Activated CD4-positive, alpha-beta memory T cell treated with anti-CD3 and anti-CD28 coated beads for 36 hours (primary cell): ENCODE measurements at regions of chr13 and their contacts with region 1.

Region 1: DNA sequence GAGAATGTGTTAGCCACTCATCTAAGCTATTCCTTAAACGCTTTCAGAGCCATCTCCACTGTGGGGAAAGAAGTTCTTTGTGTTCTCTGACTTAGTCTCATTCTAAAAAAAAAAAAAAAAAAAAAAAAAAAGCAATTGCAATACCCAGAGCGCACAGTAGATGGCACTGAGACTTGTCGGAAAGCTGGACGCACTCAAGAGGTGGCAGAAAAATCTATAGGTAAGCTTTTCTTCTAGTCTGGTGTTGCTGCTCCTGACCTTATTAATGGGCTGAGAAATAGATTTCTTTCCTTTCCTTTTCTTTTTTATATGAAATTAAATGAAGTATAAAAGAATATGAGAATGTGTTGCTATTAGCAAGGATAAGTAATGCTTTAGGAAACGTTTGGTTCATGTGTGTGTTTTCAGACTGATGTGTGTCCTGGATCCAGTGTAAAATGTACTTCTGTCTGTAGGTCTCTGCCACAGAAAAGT is 4.7 kb upstream of the GJB2 start:
- DNase-seq: no peak
- H3K4me3 Mint-ChIP-seq: peak overlapping the region; percentile 7
- H3K27ac Mint-ChIP-seq: no peak overlapping the region
- H3K4me1 Mint-ChIP-seq: peaks cover 17% of the 10 kb centered on the region
- H3K27me3 Mint-ChIP-seq: peaks cover 36% of the 10 kb centered on the region

Region 2: DNA sequence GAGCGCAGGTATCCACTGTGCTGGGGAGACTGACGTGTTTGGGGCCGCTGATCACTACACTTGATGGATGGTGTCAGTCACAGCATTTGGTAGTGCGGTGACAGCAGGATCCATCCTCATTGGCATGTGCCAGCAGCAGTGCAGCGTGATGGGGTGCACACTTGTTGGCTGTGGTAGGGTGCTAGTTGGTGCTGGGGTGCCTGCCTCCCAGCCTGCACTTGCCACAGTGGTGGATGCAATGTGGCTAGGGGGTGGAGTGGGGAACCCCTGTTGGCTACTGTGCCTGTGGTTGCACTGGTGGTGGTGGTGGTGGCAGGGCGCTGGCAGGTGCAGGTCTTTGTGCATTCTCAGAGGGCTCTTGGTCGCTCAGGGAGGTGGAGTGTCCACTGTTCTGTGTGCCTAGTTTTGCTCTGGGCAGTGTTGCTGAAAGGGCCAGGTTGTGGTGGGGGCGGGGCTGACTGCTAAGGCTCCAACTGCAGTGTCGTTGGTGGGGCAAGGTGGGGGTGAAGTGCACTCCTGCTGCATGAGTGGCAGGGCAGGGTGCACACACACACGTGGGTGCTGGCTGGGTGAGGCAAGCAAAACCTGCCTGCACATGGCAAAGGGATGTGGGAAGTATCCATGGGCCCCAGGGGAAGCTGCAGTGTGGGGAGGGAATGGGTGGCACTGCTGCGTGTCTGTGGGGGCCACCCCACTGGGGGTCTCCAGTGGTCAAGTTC is 154.0 kb before region 1 on chr13:
- CTCF ChIA-PET with region 1: no interaction called
- POLR2A ChIA-PET with region 1: no interaction called
- intact Hi-C with region 1: no loop called
- DNase-seq: no peak
- H3K4me3 Mint-ChIP-seq: no peak overlapping the region
- H3K27ac Mint-ChIP-seq: no peak overlapping the region
- H3K4me1 Mint-ChIP-seq: peaks cover 24% of the 10 kb centered on the region
- H3K27me3 Mint-ChIP-seq: no peaks in the 10 kb centered on the region

Region 3: DNA sequence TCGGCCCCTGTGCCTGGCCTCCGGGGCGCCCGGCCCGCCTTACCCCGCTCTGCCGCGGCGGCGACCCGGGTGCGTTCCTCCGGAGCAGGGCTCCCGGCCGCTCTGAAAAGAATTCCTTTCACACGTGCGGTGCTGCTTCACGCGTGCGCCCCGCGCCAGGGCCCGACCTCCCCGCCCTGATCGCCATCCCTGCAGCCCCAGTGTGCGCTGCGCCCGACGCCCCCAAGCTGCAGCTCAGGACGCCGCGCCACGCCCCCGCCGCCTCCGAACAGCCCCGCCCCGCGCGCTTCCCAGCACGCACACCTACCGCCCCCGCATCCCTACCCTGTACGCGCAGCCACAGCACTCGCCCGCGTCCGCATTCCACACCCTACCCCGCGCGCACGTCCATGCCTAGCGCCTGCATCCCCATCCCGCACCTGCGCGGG is 36.5 kb before region 1 on chr13 and contains the start of gene GJA3:
- CTCF ChIA-PET with region 1: no interaction called
- POLR2A ChIA-PET with region 1: no interaction called
- intact Hi-C with region 1: no loop called
- DNase-seq: peak; percentile 65
- H3K4me3 Mint-ChIP-seq: peak within 1 kb of the TSS; percentile 75
- H3K27ac Mint-ChIP-seq: no peak within 1 kb of the TSS
- H3K4me1 Mint-ChIP-seq: peaks cover 13% of the 10 kb centered on the region
- H3K27me3 Mint-ChIP-seq: peaks cover 46% of the 10 kb centered on the region
- total RNA-seq, gene GJA3: 0.14 to 0.29 TPM

Region 4: DNA sequence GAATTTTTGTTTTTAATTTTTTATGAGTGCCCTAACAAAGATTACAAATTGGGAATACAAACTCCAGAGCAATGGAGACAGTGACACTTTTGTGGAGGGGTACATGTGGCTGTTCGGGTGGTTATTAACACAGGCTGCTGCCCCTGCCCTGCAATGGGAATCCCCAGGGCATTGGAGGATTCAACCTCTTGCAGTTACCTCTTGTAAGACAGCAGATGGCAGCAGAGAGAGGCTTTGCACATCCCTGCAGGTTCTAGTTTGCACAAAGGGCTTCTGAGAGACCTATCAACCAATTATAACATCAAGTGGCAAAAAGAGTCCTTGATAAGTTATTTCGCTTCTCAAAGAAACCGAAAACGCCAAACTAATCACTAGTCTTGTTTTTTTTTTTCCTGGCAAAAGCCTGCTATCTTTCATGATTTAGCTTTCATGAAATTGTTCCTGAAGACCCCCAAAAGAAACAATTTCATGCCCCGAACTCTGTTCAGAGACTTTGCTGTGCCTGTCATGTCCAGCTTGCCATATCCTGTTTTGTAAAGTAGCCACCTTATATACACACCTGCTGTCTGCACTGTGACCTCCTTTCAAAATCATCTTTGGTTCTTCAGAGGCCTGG is 15.1 kb before region 1 on chr13:
- CTCF ChIA-PET with region 1: interaction called, 33 read pairs
- POLR2A ChIA-PET with region 1: interaction called, 3 read pairs
- intact Hi-C with region 1: no loop called
- DNase-seq: peak; percentile 59
- H3K4me3 Mint-ChIP-seq: no peak overlapping the region
- H3K27ac Mint-ChIP-seq: no peak overlapping the region
- H3K4me1 Mint-ChIP-seq: no peaks in the 10 kb centered on the region
- H3K27me3 Mint-ChIP-seq: peaks cover 37% of the 10 kb centered on the region

Region 5: GRCh38 chr13:20230913-20231838 is 33.8 kb after region 1 on chr13:
- CTCF ChIA-PET with region 1: interaction called, 10 read pairs
- POLR2A ChIA-PET with region 1: no interaction called
- intact Hi-C with region 1: no loop called
- DNase-seq: peak; percentile 33
- H3K4me3 Mint-ChIP-seq: peak overlapping the region; percentile 73
- H3K27ac Mint-ChIP-seq: no peak overlapping the region
- H3K4me1 Mint-ChIP-seq: peaks cover 8% of the 10 kb centered on the region
- H3K27me3 Mint-ChIP-seq: peaks cover 36% of the 10 kb centered on the region

Region 6: DNA sequence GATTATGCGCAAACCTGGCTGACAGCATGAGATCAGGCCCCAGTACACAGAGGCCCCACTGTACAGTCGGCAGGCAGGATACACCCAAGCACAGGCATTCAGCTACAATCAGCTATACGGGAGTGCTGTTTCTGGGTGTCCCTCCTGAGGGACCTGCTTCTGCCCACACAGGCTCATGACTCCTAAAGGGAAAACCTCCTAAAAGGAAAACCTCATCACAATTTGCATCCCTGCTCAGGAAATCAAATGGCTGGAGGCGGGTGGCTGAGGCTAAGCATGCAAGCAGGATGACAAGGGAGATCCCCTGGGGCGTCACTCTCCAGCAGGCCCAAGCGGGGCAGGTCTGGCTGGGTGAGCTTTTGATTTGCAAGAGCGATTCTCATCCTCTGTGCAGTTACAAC is 228.4 kb after region 1 on chr13:
- CTCF ChIA-PET with region 1: interaction called, 13 read pairs
- POLR2A ChIA-PET with region 1: no interaction called
- intact Hi-C with region 1: no loop called
- DNase-seq: peak; percentile 47
- H3K4me3 Mint-ChIP-seq: no peak overlapping the region
- H3K27ac Mint-ChIP-seq: no peak overlapping the region
- H3K4me1 Mint-ChIP-seq: peaks cover 58% of the 10 kb centered on the region
- H3K27me3 Mint-ChIP-seq: no peaks in the 10 kb centered on the region

Region 7: GRCh38 chr13:20495082-20496023 is 298.0 kb after region 1 on chr13:
- CTCF ChIA-PET with region 1: interaction called, 47 read pairs
- POLR2A ChIA-PET with region 1: no interaction called
- intact Hi-C with region 1: no loop called
- DNase-seq: peak; percentile 66
- H3K4me3 Mint-ChIP-seq: no peak overlapping the region
- H3K27ac Mint-ChIP-seq: no peak overlapping the region
- H3K4me1 Mint-ChIP-seq: no peaks in the 10 kb centered on the region
- H3K27me3 Mint-ChIP-seq: no peaks in the 10 kb centered on the region

Region 8: GRCh38 chr13:20512042-20512683 is 314.8 kb after region 1 on chr13:
- CTCF ChIA-PET with region 1: no interaction called
- POLR2A ChIA-PET with region 1: no interaction called
- intact Hi-C with region 1: no loop called
- DNase-seq: no peak
- H3K4me3 Mint-ChIP-seq: no peak overlapping the region
- H3K27ac Mint-ChIP-seq: no peak overlapping the region
- H3K4me1 Mint-ChIP-seq: no peaks in the 10 kb centered on the region
- H3K27me3 Mint-ChIP-seq: no peaks in the 10 kb centered on the region

Region 9: GRCh38 chr13:20891768-20892167 is 694.4 kb after region 1 on chr13:
- CTCF ChIA-PET with region 1: no interaction called
- POLR2A ChIA-PET with region 1: no interaction called
- intact Hi-C with region 1: no loop called
- DNase-seq: no peak
- H3K4me3 Mint-ChIP-seq: no peak overlapping the region
- H3K27ac Mint-ChIP-seq: no peak overlapping the region
- H3K4me1 Mint-ChIP-seq: peaks cover 24% of the 10 kb centered on the region
- H3K27me3 Mint-ChIP-seq: no peaks in the 10 kb centered on the region